T-cell (primary cell): ENCODE measurements at regions of chr20 and their contacts with region 1.

Region 1: DNA sequence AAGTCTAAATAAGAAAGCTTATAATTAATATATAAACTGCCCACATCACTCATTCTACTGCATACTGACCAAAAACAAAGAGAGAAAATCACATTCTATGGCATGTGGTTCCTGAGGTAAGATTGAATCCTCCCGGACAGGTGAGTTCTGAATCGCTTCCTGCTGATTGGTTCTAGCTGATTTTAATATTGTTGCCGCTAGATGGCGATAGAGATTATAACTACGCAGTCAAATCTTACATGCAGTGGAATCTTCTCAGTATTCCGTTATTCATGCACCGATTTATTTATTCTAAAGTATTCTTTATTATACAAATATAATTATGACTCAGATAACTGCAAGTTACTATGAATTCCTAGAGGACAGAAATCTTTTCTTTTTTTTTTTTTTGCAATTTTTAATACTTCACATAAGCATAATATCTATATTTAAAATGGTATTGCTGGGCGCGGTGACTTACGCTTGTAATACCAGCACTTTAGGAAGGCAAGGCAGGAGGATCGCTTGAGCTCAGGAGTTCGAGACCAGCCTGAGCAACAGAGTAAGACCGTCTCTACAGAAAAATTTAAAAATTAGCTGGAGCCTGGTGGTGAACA is 24.2 kb upstream of the TMX4 start:
- DNase-seq: peak in 9 of 35 experiments; percentile 0 to 82 (median 12)
- ATAC-seq: peak; percentile 71 to 78 (median 74)
- H3K4me3 ChIP-seq: no peak overlapping the region
- H3K4me3 Mint-ChIP-seq: no peak overlapping the region
- H3K27ac ChIP-seq: no peak overlapping the region
- H3K27ac Mint-ChIP-seq: no peak overlapping the region
- H3K4me1 ChIP-seq: no peaks in the 10 kb centered on the region
- H3K4me1 Mint-ChIP-seq: peaks cover 0 to 2% (median 1%) of the 10 kb centered on the region in 3 donors
- H3K27me3 ChIP-seq: peaks cover 0 to 9% of the 10 kb centered on the region in 2 experiments
- H3K27me3 Mint-ChIP-seq: peaks cover 8 to 13% of the 10 kb centered on the region in 2 donors

Region 2: DNA sequence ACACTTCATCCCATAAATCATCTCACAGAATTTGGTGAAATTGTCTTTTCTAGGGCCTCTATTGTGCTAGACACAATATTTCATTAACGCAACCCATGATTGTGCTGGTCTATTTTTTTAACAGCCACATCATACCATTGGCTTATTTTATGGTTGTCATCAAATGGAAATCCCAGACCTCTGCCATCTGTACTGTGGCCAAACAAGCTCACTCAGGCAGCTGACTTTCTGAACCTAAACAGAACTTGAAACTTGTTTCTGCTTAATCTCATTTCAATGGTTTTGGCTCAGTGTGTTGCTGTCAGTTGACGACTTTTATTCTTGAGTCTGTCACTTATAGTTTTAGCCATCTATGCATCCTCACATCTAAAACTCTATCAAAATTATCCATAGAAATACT is 215.3 kb before region 1 on chr20:
- CTCF ChIA-PET with region 1: no interaction called
- POLR2A ChIA-PET with region 1: no interaction called
- DNase-seq: no peak
- ATAC-seq: no peak
- H3K4me3 ChIP-seq: no peak overlapping the region
- H3K4me3 Mint-ChIP-seq: no peak overlapping the region
- H3K27ac ChIP-seq: no peak overlapping the region
- H3K27ac Mint-ChIP-seq: no peak overlapping the region
- H3K4me1 ChIP-seq: no peaks in the 10 kb centered on the region
- H3K4me1 Mint-ChIP-seq: no peaks in the 10 kb centered on the region
- H3K27me3 ChIP-seq: no peaks in the 10 kb centered on the region
- H3K27me3 Mint-ChIP-seq: no peaks in the 10 kb centered on the region

Region 3: DNA sequence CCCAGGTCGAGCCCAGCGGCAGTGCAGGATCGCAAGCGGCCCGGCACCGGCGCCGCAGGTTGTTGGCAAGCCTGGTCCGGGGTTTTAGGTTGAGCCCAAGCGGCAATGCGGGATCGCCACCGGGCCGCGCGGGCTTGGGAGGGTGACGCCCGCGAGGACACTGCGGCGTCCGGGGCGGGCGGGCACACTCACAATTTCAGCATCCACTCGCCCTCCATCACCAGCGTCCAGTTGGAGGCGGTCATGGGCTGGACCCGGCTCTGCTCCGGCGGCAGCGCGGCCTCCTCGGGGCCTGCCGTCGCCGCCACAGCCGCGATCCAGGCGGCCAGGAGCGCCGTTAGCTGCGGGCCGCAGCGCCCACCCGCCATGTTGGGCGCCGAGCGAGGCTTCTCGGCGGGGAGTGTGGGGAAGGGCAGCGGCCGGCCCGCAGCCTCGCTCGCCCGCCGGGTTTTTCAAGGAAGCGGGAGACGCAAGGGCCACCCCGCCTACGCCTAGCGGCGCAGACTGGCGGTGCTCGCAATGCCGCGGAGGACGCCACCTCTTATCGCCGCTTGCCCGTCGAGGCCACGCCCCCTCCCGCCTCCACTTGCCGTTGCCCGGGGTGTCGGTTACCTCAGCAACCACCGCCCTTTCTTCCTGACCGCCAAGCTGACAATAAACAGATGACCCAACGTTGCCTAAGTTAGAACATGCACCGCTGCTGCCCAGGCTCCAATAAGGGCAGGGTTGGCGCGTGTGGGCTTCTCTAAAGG is 24.4 kb before region 1 on chr20 and contains the start of gene TMX4:
- CTCF ChIA-PET with region 1: interaction called in 1 of 2 experiments, 13 read pairs
- POLR2A ChIA-PET with region 1: no interaction called
- DNase-seq: peak; percentile 70 to 91 (median 81)
- ATAC-seq: peak; percentile 82 to 85 (median 84)
- H3K4me3 ChIP-seq: peak within 1 kb of the TSS; percentile 68 to 82
- H3K4me3 Mint-ChIP-seq: peak within 1 kb of the TSS in 2 of 3 donors; percentile 87 to 95
- H3K27ac ChIP-seq: peak within 1 kb of the TSS; percentile 66
- H3K27ac Mint-ChIP-seq: peak within 1 kb of the TSS; percentile 88 to 90
- H3K4me1 ChIP-seq: peaks cover 11 to 23% of the 10 kb centered on the region in 2 experiments
- H3K4me1 Mint-ChIP-seq: peaks cover 31 to 41% (median 38%) of the 10 kb centered on the region in 3 donors
- H3K27me3 ChIP-seq: no peaks in the 10 kb centered on the region
- H3K27me3 Mint-ChIP-seq: no peaks in the 10 kb centered on the region
- total RNA-seq, gene TMX4: 44.2 to 69.7 (median 53.3) TPM

Region 4: DNA sequence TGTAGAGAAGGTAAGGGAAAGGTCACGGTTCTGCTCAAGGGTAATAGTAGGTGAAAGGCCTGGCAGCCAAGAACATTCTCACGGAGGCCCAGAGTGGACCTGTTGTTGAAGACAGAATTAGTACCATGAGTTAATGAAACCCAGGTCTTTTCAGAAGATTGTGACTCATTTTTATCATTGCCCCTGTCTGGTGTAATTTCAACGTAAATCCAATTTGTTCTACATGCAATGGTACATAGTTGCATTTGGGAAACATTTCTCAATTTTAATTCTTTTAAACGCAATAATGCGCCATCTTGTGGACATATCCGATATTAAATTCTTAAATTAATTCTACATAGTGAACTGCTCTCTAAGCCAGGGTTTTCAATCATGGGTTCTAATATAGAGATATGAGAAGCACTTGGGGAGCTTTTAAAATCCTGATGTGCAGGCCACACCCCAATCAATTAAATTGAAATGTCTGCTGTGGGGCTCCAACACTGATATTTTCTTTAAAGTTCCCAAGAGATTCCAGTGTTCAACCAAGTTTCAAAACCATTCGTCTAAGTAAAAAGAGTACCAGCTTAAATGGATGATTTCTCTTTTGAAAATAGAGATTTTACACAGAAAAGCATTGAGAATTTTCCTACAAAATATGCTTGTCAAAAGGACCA is 345.7 kb after region 1 on chr20:
- CTCF ChIA-PET with region 1: interaction called, 7 to 67 read pairs
- POLR2A ChIA-PET with region 1: no interaction called
- DNase-seq: peak in 2 of 35 experiments; percentile 2 to 65
- ATAC-seq: no peak
- H3K4me3 ChIP-seq: no peak overlapping the region
- H3K4me3 Mint-ChIP-seq: no peak overlapping the region
- H3K27ac ChIP-seq: no peak overlapping the region
- H3K27ac Mint-ChIP-seq: no peak overlapping the region
- H3K4me1 ChIP-seq: no peaks in the 10 kb centered on the region
- H3K4me1 Mint-ChIP-seq: peaks cover 0 to 6% (median 0%) of the 10 kb centered on the region in 3 donors
- H3K27me3 ChIP-seq: peaks cover 0 to 7% of the 10 kb centered on the region in 2 experiments
- H3K27me3 Mint-ChIP-seq: peaks cover 0 to 4% of the 10 kb centered on the region in 2 donors

Region 5: GRCh38 chr20:8722276-8722928 is 678.6 kb after region 1 on chr20:
- CTCF ChIA-PET with region 1: interaction called, 37 to 90 read pairs
- POLR2A ChIA-PET with region 1: interaction called in 1 of 2 experiments, 3 read pairs
- DNase-seq: peak in 14 of 35 experiments; percentile 1 to 69 (median 9)
- ATAC-seq: peak in 2 of 4 experiments; percentile 48 to 57
- H3K4me3 ChIP-seq: no peak overlapping the region
- H3K4me3 Mint-ChIP-seq: no peak overlapping the region
- H3K27ac ChIP-seq: no peak overlapping the region
- H3K27ac Mint-ChIP-seq: no peak overlapping the region
- H3K4me1 ChIP-seq: no peaks in the 10 kb centered on the region
- H3K4me1 Mint-ChIP-seq: no peaks in the 10 kb centered on the region
- H3K27me3 ChIP-seq: no peaks in the 10 kb centered on the region
- H3K27me3 Mint-ChIP-seq: no peaks in the 10 kb centered on the region